BJ (cell line): ENCODE measurements at regions of chr16 and their contacts with region 1.

Region 1: GRCh38 chr16:87062569-87063442 is 254.4 kb downstream of the C16orf95 start:
- DNase-seq: no peak
- H3K4me3 ChIP-seq: no peak overlapping the region
- H3K27me3 ChIP-seq: no peaks in the 10 kb centered on the region
- CTCF ChIP-seq: peak; percentile 86

Region 2: DNA sequence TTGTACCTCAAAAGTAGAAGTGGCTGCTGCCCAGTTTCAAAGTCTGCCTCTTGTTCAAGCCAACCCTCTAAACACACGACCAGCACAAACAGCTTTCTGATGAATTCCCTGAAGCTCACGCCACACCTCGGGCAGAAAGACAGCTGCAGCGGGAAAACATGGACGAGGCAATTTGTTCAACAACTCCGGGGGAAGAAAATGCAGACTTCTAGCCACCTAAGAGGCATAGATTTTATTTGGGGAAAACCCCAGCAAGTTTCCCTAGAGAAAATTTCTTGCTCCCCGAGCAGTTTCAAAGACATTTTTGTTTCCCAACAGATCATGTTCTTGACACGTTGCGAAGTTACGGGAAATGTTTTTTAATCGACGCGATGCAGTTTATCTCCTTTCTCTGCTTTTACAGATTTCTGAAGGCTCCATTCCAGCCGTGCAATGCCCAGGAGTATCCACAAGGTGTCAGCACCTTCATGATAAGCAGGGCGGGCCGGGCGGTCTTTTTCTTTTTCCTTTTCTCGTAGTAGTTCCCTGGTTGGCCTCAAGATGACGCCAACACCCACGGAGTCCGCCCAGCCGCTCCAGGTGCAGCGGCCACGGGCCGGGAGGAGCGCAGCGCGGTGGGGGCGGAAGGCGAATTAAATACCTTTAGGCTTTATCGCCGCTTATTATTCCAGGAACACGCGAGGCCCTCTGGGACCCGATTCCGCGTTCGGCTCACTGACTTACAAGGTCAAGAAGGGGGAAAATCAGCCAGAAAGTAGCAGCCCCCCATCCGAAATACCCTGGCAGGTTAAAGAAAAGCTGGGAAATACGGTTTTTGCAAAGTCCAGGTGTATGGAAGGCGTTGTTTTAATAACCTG is 499.1 kb before region 1 on chr16:
- CTCF ChIA-PET with region 1: interaction called, 117 read pairs
- POLR2A ChIA-PET with region 1: no interaction called
- DNase-seq: no peak
- H3K4me3 ChIP-seq: peak overlapping the region; percentile 26
- H3K27me3 ChIP-seq: peaks cover 4% of the 10 kb centered on the region
- CTCF ChIP-seq: peak; percentile 100

Region 3: GRCh38 chr16:86575754-86576557 is 486.9 kb before region 1 on chr16:
- CTCF ChIA-PET with region 1: interaction called, 19 read pairs
- POLR2A ChIA-PET with region 1: no interaction called
- DNase-seq: peak; percentile 65
- H3K4me3 ChIP-seq: peak overlapping the region; percentile 48
- H3K27me3 ChIP-seq: no peaks in the 10 kb centered on the region
- CTCF ChIP-seq: peak; percentile 93

Region 4: DNA sequence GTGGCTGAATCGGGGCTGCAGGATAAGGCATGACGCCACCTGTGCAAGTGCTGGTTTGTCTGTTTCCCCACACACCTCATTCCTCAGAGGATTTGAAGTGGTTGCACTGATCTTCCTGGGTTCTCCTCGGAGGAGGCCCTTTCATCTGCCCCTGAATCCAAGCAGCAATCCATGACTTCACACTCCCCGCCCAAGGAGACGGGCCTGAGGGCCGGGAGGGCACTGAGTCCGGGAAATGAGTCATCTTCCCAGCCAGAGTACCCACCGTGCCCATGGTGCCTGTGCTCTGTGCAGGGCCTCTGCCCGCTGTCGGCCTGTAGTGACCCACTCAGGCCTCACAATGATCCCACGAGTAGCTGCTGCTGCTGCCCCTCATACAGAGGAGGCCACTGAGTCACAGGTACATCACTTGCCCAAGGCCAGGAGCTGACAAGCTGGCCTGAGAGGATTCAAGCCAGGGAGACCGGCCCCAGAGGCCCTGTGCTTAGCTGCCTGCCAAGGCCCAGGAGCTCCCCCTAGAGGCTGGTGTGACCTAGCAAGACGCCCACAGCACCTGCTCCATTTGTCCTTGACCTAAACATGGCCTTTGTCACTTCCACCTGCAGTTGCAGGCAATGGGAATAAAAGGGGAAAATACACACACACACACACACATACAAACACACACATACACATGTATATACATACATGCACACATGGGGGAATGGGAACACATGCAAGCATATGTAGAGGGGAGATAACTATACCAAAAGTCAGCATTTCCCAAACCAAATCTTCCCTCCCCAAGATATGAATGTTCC is 14.3 kb after region 1 on chr16:
- CTCF ChIA-PET with region 1: interaction called, 28 read pairs
- POLR2A ChIA-PET with region 1: interaction called, 12 read pairs
- DNase-seq: no peak
- H3K4me3 ChIP-seq: no peak overlapping the region
- H3K27me3 ChIP-seq: no peaks in the 10 kb centered on the region; the same call in 1 of the 2 replicates
- CTCF ChIP-seq: peak; percentile 79

Region 5: GRCh38 chr16:87602821-87603683 is 540.2 kb after region 1 on chr16:
- CTCF ChIA-PET with region 1: no interaction called
- POLR2A ChIA-PET with region 1: no interaction called
- DNase-seq: no peak
- H3K4me3 ChIP-seq: no peak overlapping the region
- H3K27me3 ChIP-seq: peaks cover 52% of the 10 kb centered on the region
- CTCF ChIP-seq: no peak

Region 6: GRCh38 chr16:88437373-88437964 is 1374.7 kb after region 1 on chr16:
- CTCF ChIA-PET with region 1: no interaction called
- POLR2A ChIA-PET with region 1: no interaction called
- DNase-seq: no peak
- H3K4me3 ChIP-seq: no peak overlapping the region
- H3K27me3 ChIP-seq: no peaks in the 10 kb centered on the region
- CTCF ChIP-seq: peak; percentile 73